ENCODE measurements at regions of chr2 and their contacts with region 1.

Region 1: GRCh38 chr2:12884713-12885282 is 168.1 kb downstream of the TRIB2 start:
- DNase-seq: no peak
- H3K4me3 Mint-ChIP-seq: no peak overlapping the region
- H3K27ac Mint-ChIP-seq: no peak overlapping the region
- H3K4me1 Mint-ChIP-seq: no peaks in the 10 kb centered on the region
- H3K27me3 Mint-ChIP-seq: no peaks in the 10 kb centered on the region

Region 2: GRCh38 chr2:12867631-12868287 is 17.0 kb before region 1 on chr2:
- CTCF ChIA-PET with region 1: no interaction called
- POLR2A ChIA-PET with region 1: no interaction called
- intact Hi-C with region 1: no loop called
- DNase-seq: no peak
- H3K4me3 Mint-ChIP-seq: no peak overlapping the region
- H3K27ac Mint-ChIP-seq: no peak overlapping the region
- H3K4me1 Mint-ChIP-seq: no peaks in the 10 kb centered on the region
- H3K27me3 Mint-ChIP-seq: peaks cover 2% of the 10 kb centered on the region

Region 3: DNA sequence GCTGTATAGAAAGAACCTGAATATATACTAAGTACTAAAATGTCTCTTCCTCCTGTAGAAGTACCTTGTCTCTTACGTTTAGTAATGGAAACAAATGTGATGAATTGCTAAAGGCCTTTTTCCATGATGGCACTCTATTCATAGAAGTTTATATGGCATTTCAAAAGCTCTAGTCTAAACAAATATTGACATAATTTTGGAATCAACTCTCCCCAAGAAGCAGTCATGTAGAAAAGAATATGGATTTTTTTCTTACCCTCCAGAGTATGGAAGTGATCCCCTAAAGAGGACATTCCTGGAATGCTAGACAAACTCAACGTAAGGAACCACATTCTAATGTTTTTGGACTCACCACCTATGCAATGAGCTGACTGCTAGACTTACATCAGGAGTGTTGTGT is 32.5 kb after region 1 on chr2:
- CTCF ChIA-PET with region 1: no interaction called
- POLR2A ChIA-PET with region 1: no interaction called
- intact Hi-C with region 1: loop called (anchors 1 kb)
- DNase-seq: no peak
- H3K4me3 Mint-ChIP-seq: no peak overlapping the region
- H3K27ac Mint-ChIP-seq: no peak overlapping the region
- H3K4me1 Mint-ChIP-seq: no peaks in the 10 kb centered on the region
- H3K27me3 Mint-ChIP-seq: peaks cover 6% of the 10 kb centered on the region

Region 4: GRCh38 chr2:12948961-12949353 is 64.2 kb after region 1 on chr2:
- CTCF ChIA-PET with region 1: no interaction called
- POLR2A ChIA-PET with region 1: no interaction called
- intact Hi-C with region 1: no loop called
- DNase-seq: peak; percentile 46
- H3K4me3 Mint-ChIP-seq: no peak overlapping the region
- H3K27ac Mint-ChIP-seq: no peak overlapping the region
- H3K4me1 Mint-ChIP-seq: peaks cover 9% of the 10 kb centered on the region
- H3K27me3 Mint-ChIP-seq: peaks cover 4% of the 10 kb centered on the region

Region 5: DNA sequence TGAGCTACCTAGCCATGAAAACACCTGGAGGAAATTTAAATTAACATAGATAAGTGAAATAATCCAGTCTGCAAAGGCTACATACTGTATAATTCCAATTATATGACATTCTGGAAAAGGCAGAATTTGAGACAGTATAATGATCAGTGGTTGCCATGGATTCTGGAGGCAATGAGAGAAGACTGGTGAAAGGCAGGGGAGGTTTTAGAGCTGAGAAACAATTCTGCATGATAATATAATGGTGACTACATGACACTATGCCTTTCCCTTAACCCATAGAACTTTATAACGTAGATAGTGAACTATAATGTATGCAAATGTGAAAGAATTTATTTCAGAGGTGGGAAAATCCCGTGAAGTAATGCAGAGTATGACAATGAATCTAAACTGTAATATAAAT is 581.3 kb after region 1 on chr2:
- CTCF ChIA-PET with region 1: no interaction called
- POLR2A ChIA-PET with region 1: no interaction called
- intact Hi-C with region 1: no loop called
- DNase-seq: no peak
- H3K4me3 Mint-ChIP-seq: no peak overlapping the region
- H3K27ac Mint-ChIP-seq: no peak overlapping the region
- H3K4me1 Mint-ChIP-seq: no peaks in the 10 kb centered on the region
- H3K27me3 Mint-ChIP-seq: no peaks in the 10 kb centered on the region